ENCODE measurements at regions of chr9 and their contacts with region 1.

Region 1: DNA sequence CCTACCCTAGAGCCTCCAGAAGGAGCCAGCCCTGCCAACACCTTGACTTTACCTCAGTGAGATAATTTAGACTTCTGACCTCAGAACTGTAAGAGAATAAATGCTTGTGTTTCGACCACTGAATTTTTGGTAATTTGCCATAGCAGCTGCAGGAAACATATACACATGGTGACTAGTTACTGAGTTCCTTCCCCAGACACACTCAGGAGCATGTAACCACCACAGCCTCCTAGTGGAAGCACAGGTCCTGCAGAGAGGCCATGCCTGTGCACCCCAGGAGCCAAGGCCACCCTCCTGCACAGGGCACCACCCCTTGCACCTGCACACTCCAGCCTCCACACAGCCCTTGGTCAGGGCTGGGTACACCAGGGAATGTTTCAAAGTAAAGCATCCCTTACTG is 7.6 kb upstream of the CAMSAP1 start:
- DNase-seq: no peak
- ATAC-seq: no peak

Region 2: DNA sequence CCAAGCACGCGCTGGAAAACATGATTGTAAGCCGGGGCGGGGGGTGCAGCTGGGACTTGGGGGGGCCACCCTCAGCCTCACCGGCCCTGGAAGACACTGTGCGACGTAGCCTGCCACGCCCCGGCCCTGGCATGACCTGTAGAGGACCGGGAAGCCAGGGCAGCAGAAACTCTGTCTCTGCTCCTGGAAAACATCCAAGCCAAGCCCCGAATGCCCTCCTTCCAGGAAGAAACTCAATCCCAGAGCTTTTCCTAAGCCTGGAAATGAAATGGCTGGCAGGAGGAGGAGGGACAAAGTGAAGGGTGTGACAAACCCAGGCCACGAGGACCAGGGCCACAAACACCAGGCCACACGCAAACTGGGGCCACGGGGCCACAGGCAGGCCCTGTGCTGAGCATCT is 157.6 kb before region 1 on chr9:
- intact Hi-C with region 1: no loop called
- DNase-seq: no peak
- ATAC-seq: no peak

Region 3: GRCh38 chr9:135857371-135857786 is 57.5 kb before region 1 on chr9:
- intact Hi-C with region 1: no loop called
- DNase-seq: no peak
- ATAC-seq: no peak

Region 4: GRCh38 chr9:135961277-135961705 is 46.4 kb after region 1 on chr9 and contains the start of gene UBAC1:
- intact Hi-C with region 1: loop called in 1 of 2 experiments (anchors 5 kb)
- DNase-seq: peak; percentile 98
- ATAC-seq: peak; percentile 92 to 94
- total RNA-seq, gene UBAC1: 64.9 to 65.7 TPM